Activated CD8-positive, alpha-beta T cell treated with anti-CD3 and anti-CD28 coated beads for 36 hours (primary cell): ENCODE measurements at regions of chr1 and their contacts with region 1.

Region 1: GRCh38 chr1:200302192-200302920 is 107.5 kb downstream of the ZNF281 start:
- DNase-seq: peak; percentile 61
- ATAC-seq: peak; percentile 94
- H3K4me3 Mint-ChIP-seq: peak overlapping the region; percentile 77
- H3K27ac Mint-ChIP-seq: peak overlapping the region; percentile 49
- H3K4me1 Mint-ChIP-seq: peaks cover 11% of the 10 kb centered on the region
- H3K27me3 Mint-ChIP-seq: peaks cover 4% of the 10 kb centered on the region
- CTCF ChIP-seq: no peak

Region 2: DNA sequence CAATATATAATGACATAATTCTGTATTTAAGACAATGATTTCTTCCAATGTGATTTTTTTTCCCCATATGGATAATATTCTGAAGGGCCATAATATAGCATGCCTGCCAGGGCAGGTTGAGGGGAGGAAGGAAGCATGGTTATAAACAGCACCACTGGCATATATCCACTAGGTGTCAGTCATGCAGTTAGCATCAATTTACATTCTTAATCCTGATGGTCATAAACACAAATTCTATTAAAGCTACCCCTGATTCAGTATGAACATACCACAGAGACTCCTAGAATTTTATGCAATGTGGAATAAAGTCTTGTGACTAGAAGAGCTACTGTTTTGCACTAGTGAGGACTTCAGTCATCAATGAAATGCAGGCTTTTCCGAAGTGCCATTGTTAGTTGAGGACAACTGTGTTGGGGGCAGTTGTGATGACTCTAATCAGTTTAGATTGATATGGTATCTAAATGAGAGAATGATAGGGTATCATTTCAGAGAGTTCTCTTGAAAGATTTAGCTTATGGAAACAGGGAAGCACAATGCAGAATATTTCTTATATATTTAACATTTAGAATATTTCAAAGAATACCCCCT is 617.6 kb before region 1 on chr1:
- CTCF ChIA-PET with region 1: interaction called, 6 read pairs
- POLR2A ChIA-PET with region 1: no interaction called
- intact Hi-C with region 1: loop called (anchors 10 kb)
- DNase-seq: peak; percentile 45
- ATAC-seq: peak; percentile 83
- H3K4me3 Mint-ChIP-seq: no peak overlapping the region
- H3K27ac Mint-ChIP-seq: no peak overlapping the region
- H3K4me1 Mint-ChIP-seq: no peaks in the 10 kb centered on the region
- H3K27me3 Mint-ChIP-seq: peaks cover 13% of the 10 kb centered on the region
- CTCF ChIP-seq: peak; percentile 74

Region 3: GRCh38 chr1:200128944-200129885 is 173.1 kb before region 1 on chr1:
- CTCF ChIA-PET with region 1: no interaction called
- POLR2A ChIA-PET with region 1: no interaction called
- intact Hi-C with region 1: no loop called
- DNase-seq: peak; percentile 46
- ATAC-seq: peak; percentile 92
- H3K4me3 Mint-ChIP-seq: no peak overlapping the region
- H3K27ac Mint-ChIP-seq: peak overlapping the region; percentile 47
- H3K4me1 Mint-ChIP-seq: peaks cover 16% of the 10 kb centered on the region
- H3K27me3 Mint-ChIP-seq: no peaks in the 10 kb centered on the region
- CTCF ChIP-seq: no peak

Region 4: GRCh38 chr1:200139661-200140250 is 162.6 kb before region 1 on chr1:
- CTCF ChIA-PET with region 1: interaction called, 11 read pairs
- POLR2A ChIA-PET with region 1: no interaction called
- intact Hi-C with region 1: loop called (anchors 5 kb)
- DNase-seq: peak; percentile 45
- ATAC-seq: peak; percentile 85
- H3K4me3 Mint-ChIP-seq: no peak overlapping the region
- H3K27ac Mint-ChIP-seq: no peak overlapping the region
- H3K4me1 Mint-ChIP-seq: no peaks in the 10 kb centered on the region
- H3K27me3 Mint-ChIP-seq: no peaks in the 10 kb centered on the region
- CTCF ChIP-seq: peak; percentile 90

Region 5: DNA sequence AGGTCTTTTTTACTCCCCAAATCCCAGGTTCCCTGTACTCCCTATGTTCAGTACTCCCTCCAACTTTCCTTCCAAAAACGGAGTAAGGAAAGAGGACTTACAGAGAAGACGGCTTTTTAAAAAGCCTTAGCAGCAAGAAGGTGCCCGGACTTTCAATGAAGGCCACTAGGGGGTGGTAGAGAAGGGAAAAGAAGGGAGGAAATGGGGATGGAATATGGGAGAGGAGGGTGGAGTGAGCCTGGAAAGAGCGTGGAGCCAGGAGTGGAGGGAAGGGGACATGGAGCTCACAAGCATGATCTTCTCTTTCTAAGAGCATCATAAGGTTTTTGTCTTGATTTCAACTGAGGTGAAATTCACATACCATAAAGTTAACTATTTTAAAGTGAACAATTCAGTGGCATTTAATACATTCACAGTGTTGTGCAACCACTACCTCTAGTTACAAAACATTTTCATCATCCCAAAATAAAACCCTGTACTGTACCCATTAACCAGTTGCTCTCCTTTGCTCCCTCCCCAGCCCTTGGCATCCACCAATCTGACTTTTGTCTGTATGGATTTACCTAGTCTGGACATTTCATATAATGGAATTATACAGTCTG is 22.4 kb before region 1 on chr1:
- CTCF ChIA-PET with region 1: interaction called, 28 read pairs
- POLR2A ChIA-PET with region 1: interaction called, 3 read pairs
- intact Hi-C with region 1: no loop called
- DNase-seq: peak; percentile 51
- ATAC-seq: no peak
- H3K4me3 Mint-ChIP-seq: no peak overlapping the region
- H3K27ac Mint-ChIP-seq: no peak overlapping the region
- H3K4me1 Mint-ChIP-seq: no peaks in the 10 kb centered on the region
- H3K27me3 Mint-ChIP-seq: peaks cover 2% of the 10 kb centered on the region
- CTCF ChIP-seq: peak; percentile 74

Region 6: GRCh38 chr1:200488375-200489165 is 186.2 kb after region 1 on chr1:
- CTCF ChIA-PET with region 1: interaction called, 6 read pairs
- POLR2A ChIA-PET with region 1: no interaction called
- intact Hi-C with region 1: loop called (anchors 10 kb)
- DNase-seq: peak; percentile 60
- ATAC-seq: peak; percentile 73
- H3K4me3 Mint-ChIP-seq: no peak overlapping the region
- H3K27ac Mint-ChIP-seq: no peak overlapping the region
- H3K4me1 Mint-ChIP-seq: peaks cover 5% of the 10 kb centered on the region
- H3K27me3 Mint-ChIP-seq: peaks cover 13% of the 10 kb centered on the region
- CTCF ChIP-seq: peak; percentile 91